ENCODE measurements at regions of chr1 and their contacts with region 1.

Region 1: GRCh38 chr1:30929135-30929889 is 20.8 kb upstream of the SDC3 start:
- DNase-seq: no peak
- ATAC-seq: peak; percentile 91
- H3K4me3 ChIP-seq: no peak overlapping the region
- H3K27ac ChIP-seq: no peak overlapping the region
- H3K4me1 ChIP-seq: no peaks in the 10 kb centered on the region; the same call in 1 of the 2 replicates
- H3K27me3 ChIP-seq: no peaks in the 10 kb centered on the region
- CTCF ChIP-seq: peak; percentile 69 to 80 (median 79)
- EP300 ChIP-seq: no peak
- POLR2A ChIP-seq: no peak
- RAD21 ChIP-seq: peak; percentile 78

Region 2: GRCh38 chr1:30911046-30911954 is 18.0 kb before region 1 on chr1:
- CTCF ChIA-PET with region 1: interaction called, 16 read pairs
- POLR2A ChIA-PET with region 1: interaction called, 3 read pairs
- RAD21 ChIA-PET with region 1: interaction called, 7 read pairs
- SMC1A ChIA-PET with region 1: interaction called, 9 read pairs
- in situ Hi-C with region 1: no loop called
- intact Hi-C with region 1: no loop called
- DNase-seq: no peak
- ATAC-seq: peak; percentile 84
- H3K4me3 ChIP-seq: no peak overlapping the region
- H3K27ac ChIP-seq: no peak overlapping the region
- H3K4me1 ChIP-seq: no peaks in the 10 kb centered on the region
- H3K27me3 ChIP-seq: peaks cover 16% of the 10 kb centered on the region in 2 experiments
- CTCF ChIP-seq: peak; percentile 71 to 82 (median 79)
- EP300 ChIP-seq: no peak
- POLR2A ChIP-seq: no peak
- RAD21 ChIP-seq: peak; percentile 88

Region 3: GRCh38 chr1:30919025-30919881 is 10.1 kb before region 1 on chr1:
- CTCF ChIA-PET with region 1: interaction called, 10 read pairs
- POLR2A ChIA-PET with region 1: interaction called, 3 read pairs
- RAD21 ChIA-PET with region 1: interaction called, 4 read pairs
- SMC1A ChIA-PET with region 1: interaction called, 7 read pairs
- in situ Hi-C with region 1: no loop called
- intact Hi-C with region 1: no loop called
- DNase-seq: no peak
- ATAC-seq: peak; percentile 36; the same call in 1 of the 3 replicates
- H3K4me3 ChIP-seq: no peak overlapping the region
- H3K27ac ChIP-seq: no peak overlapping the region
- H3K4me1 ChIP-seq: no peaks in the 10 kb centered on the region
- H3K27me3 ChIP-seq: no peaks in the 10 kb centered on the region
- CTCF ChIP-seq: no peak
- EP300 ChIP-seq: no peak
- POLR2A ChIP-seq: no peak
- RAD21 ChIP-seq: no peak

Region 4: GRCh38 chr1:31027693-31028526 is 98.6 kb after region 1 on chr1:
- CTCF ChIA-PET with region 1: no interaction called
- POLR2A ChIA-PET with region 1: interaction called, 10 read pairs
- RAD21 ChIA-PET with region 1: no interaction called
- SMC1A ChIA-PET with region 1: no interaction called
- in situ Hi-C with region 1: no loop called
- intact Hi-C with region 1: no loop called
- DNase-seq: no peak
- ATAC-seq: peak; percentile 81
- H3K4me3 ChIP-seq: 0 out of 2 replicates have a peak overlapping the region, but pooled peaks have one; percentile 5
- H3K27ac ChIP-seq: peak overlapping the region; percentile 40; the same call in 1 of the 2 replicates
- H3K4me1 ChIP-seq: peaks cover 20% of the 10 kb centered on the region
- H3K27me3 ChIP-seq: no peaks in the 10 kb centered on the region
- CTCF ChIP-seq: no peak
- EP300 ChIP-seq: no peak
- POLR2A ChIP-seq: no peak
- RAD21 ChIP-seq: no peak